AG04449 (cell line): ENCODE measurements at regions of chr14 and their contacts with region 1.

Region 1: DNA sequence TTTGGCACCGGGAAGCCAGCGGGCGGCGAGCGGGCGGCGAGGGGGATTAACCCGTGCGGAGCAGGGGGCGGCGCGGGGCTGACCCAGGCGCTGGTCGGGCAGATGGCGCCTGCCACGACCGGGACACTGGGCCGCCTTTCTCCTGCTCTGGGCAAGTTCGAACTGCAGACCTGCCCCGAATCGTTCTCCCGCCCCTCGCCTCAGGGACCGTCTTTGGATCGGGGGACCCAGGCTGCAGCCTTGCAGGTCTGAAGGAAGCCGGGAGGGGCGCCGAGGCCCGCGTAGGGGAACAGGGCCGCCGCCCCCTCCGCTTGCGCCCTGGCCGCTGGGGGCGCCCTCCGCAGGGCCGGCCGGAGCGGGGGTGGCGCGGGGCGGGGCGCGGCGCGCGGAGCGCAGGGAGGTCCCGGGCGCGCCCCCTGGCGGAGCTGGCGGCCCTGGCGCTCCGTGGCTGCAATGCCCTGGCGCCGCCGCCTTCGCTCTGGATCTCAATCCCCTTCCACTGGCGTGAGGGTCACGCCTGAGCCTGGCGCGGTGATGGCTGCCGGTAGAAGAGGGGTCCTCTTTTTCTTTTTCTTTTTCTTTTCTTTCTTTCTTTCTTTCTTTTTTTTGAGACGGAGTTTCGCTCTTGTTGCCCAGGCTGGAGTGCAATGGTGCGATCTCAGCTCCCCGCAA is 449 bp upstream of the LTBP2 start:
- DNase-seq: no peak
- H3K4me3 ChIP-seq: peak overlapping the region; percentile 67
- CTCF ChIP-seq: peak; percentile 73

Region 2: DNA sequence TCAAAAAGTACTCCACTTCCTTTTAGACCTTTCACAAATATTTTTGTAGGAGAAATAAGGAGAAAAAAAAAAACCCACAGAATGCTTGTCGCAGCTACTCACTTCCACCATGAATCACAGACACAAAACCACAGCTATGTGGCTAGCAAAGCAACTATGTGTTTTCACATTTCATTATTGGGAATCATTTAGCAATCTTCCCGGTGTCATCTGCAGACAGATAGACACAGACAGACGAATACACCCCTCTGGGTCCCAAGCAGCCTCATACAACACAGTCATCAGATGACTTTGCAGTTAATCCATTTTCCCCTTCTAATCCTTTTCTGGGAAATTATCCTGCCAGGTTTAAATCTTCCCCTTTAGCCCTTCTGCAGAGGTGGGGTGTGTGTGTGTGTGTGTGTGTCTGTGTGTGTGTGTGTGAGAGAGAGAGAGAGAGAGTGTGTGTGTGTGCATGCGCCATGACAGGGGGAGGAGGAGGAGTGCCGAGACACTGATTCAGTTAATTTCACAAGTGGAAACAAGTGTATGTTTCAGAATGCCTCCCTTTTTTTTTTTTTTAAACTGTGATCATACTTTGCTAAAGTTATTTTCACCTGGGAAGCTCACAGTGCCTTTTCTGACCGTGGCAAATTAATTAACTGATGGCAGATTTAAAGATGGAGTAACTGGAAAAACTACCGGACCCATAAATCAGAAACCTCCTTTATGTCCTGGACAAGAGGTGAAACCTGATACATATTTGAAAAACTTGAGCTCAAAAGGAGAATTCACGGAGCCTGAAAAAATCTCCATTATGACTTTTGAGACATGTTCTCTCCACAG is 40.4 kb before region 1 on chr14:
- CTCF ChIA-PET with region 1: interaction called, 27 read pairs
- POLR2A ChIA-PET with region 1: interaction called, 18 read pairs
- DNase-seq: peak; percentile 99
- H3K4me3 ChIP-seq: peak overlapping the region; percentile 36
- CTCF ChIP-seq: no peak

Region 3: GRCh38 chr14:74595006-74595735 is 17.3 kb before region 1 on chr14:
- CTCF ChIA-PET with region 1: interaction called, 91 read pairs
- POLR2A ChIA-PET with region 1: no interaction called
- DNase-seq: no peak
- H3K4me3 ChIP-seq: no peak overlapping the region
- CTCF ChIP-seq: no peak

Region 4: DNA sequence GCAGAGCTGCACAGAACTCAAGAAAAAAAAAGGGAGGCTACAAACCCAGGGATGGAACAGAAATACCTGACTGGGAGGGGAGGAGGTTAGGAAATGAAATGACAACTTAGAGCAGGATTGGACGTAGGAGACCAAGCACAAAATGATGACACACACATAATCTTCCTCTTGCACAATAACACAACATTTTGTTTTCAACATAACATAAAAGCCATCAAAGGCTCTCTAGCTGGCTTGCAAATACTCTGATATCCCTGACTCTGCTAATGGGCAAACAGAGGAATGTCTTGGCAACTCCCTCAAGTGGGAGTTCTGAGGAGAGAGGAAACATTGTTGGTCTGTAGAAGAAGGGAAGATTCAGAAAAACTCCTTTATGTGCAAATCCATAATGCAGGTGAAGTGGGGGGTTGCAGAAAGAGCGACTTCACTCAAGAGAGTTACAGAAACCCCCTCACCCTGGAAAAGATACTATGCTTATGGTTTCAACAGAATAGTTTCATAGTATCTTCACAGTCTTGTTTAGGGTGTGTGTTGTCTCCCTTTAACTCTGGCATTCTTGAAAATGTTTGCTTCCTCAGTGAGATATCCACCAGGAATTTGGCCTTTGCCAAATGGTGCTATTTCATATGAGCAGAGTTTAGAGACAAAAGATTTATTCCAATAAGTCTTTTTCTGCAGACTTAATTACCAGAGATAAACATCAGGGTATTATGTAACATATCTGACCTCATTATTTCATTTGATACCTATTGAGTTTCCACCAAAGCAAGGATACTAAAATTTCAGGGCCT is 43.3 kb after region 1 on chr14:
- CTCF ChIA-PET with region 1: interaction called, 66 read pairs
- POLR2A ChIA-PET with region 1: interaction called, 5 read pairs
- DNase-seq: peak; percentile 59
- H3K4me3 ChIP-seq: no peak overlapping the region
- CTCF ChIP-seq: no peak

Region 5: DNA sequence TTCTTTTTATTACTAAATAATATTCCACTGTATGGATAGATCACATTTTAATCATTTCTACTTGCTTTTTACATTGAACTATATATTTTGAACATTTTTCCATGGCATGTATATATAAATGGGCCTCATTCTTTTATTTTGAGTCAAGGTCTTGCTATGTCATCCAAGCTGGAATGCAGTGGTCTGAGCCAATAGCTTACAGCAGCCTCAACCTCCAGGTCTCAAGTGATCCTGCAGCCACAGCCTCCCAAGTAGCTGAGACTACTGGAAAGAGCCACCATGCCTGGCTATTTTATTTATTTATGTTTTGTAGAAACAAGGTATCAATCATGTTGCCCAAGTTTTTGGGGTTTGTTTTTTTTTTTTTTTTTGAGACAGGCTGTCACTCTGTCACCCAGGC is 108.0 kb after region 1 on chr14:
- CTCF ChIA-PET with region 1: interaction called, 12 read pairs
- POLR2A ChIA-PET with region 1: no interaction called
- DNase-seq: peak; percentile 66
- H3K4me3 ChIP-seq: no peak overlapping the region
- CTCF ChIP-seq: no peak

Region 6: DNA sequence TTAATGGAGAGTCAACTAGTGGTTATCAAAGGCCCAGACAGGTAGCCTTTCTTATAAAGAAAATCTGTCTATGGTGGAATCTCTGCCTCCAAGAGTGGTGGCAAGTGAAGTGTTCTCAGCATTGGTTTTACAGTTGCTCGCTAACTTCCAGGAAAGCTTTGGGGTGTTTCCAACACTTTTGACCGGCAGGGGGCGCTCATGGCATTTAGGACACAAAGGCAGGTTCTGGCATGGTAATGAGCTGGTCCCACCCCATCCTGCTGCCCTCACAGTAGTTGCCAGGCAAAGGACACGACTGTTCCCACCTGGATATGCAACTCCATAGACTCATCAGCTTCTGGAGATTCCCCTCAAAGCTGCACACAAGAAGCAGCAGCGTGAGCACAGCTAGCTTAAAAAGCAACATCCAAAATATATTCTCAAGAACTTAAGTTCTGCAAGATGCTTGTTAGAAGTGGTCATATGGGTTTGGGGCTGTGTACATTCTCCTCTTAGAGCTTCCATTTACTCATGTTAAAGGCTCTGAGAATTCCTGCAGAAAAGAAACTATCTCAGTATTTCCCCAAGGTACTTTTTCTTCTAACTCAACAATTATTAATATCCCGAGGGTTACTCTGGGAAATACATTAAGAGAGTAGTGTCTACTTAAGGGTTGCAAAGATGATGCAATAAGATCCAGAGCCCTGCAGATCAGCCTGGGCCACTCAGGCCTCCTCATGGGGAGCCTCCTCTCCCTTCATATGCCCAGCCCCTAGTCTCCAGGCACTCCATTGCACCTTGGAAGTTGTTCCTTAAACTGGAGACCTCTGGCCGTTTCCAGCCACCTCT is 248.6 kb after region 1 on chr14:
- CTCF ChIA-PET with region 1: interaction called, 89 read pairs
- POLR2A ChIA-PET with region 1: no interaction called
- DNase-seq: no peak
- H3K4me3 ChIP-seq: no peak overlapping the region
- CTCF ChIP-seq: peak; percentile 84